Right cardiac atrium (tissue), 5 donors: ENCODE measurements at regions of chr17 and their contacts with region 1.

Region 1: DNA sequence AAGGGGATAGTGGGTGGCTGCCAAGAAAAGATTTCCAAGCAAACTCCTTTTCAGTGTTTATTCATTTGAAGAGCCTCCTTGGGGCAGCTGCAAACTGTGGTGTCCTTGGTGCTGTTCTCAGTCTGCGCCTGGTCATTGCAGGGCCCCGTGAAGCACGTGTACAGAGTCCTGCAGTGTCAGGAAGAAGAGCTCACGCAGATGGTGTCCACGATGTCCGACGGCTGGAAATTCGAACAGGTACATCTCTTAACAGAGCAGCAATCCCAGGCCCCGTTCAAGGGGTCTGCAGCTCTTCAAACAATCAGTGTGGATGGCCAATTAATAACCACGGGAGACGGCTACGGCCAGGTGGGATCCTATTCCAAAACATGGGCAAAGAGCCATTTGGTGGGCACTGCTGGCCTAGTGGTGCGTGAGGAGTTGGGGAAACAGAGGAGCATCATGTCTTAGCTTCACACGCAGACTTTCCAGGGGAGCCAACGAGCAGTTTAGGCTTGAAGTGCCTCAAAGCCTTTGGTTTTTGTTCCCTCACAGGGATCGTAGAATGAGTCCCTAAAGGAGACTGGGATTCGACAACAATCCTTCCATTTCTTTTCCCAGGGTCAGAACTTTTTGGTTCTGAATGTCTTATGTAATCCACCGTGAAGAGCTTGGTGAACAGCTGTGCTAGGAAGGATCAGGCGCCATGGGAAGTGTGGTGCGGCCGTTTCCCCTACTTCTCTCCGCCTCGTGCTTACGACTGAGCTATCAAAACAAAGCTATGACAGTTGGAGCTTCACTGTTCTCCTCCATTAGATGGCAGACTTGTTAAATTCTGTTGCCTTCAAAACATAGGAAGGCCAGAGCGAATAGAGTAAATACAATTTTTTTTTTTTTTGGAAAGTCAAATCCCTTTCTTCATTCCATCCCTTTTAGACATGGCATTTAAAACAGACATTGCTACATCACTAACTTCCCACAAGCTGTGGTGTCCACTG is 12.6 kb downstream of the KCTD2 start:
- DNase-seq: peak in 1 of 3 donors; percentile 70
- ATAC-seq: peak; percentile 81 to 85
- H3K4me3 ChIP-seq: no peak overlapping the region
- H3K27ac ChIP-seq: peak overlapping the region; percentile 3
- H3K4me1 ChIP-seq: no peaks in the 10 kb centered on the region
- H3K27me3 ChIP-seq: no peaks in the 10 kb centered on the region

Region 2: DNA sequence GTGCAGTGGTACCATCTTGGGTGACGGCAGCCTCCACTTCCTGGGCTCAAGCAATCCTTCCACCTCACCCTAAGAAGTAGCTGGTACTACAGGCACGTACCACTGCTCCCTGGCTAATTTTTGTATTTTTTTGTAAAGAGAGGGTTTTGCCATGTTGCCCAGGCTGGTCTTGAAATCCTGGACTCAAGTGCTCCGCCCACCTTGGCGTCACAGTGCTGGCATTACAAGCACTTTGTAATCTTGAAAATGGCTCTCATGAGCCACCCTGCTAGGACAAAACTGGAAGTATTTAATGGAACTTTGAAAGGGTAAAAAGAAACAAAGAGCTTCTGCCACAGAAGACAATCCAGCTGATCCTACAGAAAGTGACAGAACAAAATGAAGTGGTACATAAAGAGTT is 113.9 kb after region 1 on chr17:
- intact Hi-C with region 1: loop called in 1 of 4 experiments (anchors 10 kb)
- DNase-seq: no peak
- ATAC-seq: no peak
- H3K4me3 ChIP-seq: no peak overlapping the region
- H3K27ac ChIP-seq: peak overlapping the region; percentile 26
- H3K4me1 ChIP-seq: no peaks in the 10 kb centered on the region
- H3K27me3 ChIP-seq: no peaks in the 10 kb centered on the region

Region 3: GRCh38 chr17:75205037-75205792 is 145.6 kb after region 1 on chr17 and contains the start of gene NUP85:
- intact Hi-C with region 1: loop called in 1 of 4 experiments (anchors 10 kb)
- DNase-seq: peak; percentile 96 to 98 (median 98)
- ATAC-seq: peak; percentile 96 to 97
- H3K4me3 ChIP-seq: peak within 1 kb of the TSS; percentile 95
- H3K27ac ChIP-seq: peak within 1 kb of the TSS; percentile 91
- H3K4me1 ChIP-seq: no peaks in the 10 kb centered on the region
- H3K27me3 ChIP-seq: no peaks in the 10 kb centered on the region
- total RNA-seq, gene NUP85: 31.3 to 36.1 (median 34.2) TPM